ENCODE measurements at regions of chr12 and their contacts with region 1.

Region 1: GRCh38 chr12:111761099-111761498 is 5.6 kb upstream of the ALDH2 start:
- DNase-seq: no peak
- ATAC-seq: no peak
- H3K4me3 Mint-ChIP-seq: peak overlapping the region; percentile 78
- H3K27ac Mint-ChIP-seq: peak overlapping the region; percentile 92
- H3K4me1 Mint-ChIP-seq: peaks cover 88% of the 10 kb centered on the region
- H3K27me3 Mint-ChIP-seq: no peaks in the 10 kb centered on the region
- CTCF ChIP-seq: no peak

Region 2: GRCh38 chr12:111730420-111730819 is 30.7 kb before region 1 on chr12:
- CTCF ChIA-PET with region 1: no interaction called
- POLR2A ChIA-PET with region 1: no interaction called
- intact Hi-C with region 1: no loop called
- DNase-seq: no peak
- ATAC-seq: peak; percentile 50
- H3K4me3 Mint-ChIP-seq: no peak overlapping the region
- H3K27ac Mint-ChIP-seq: peak overlapping the region; percentile 76
- H3K4me1 Mint-ChIP-seq: peaks cover 11% of the 10 kb centered on the region
- H3K27me3 Mint-ChIP-seq: no peaks in the 10 kb centered on the region
- CTCF ChIP-seq: no peak

Region 3: GRCh38 chr12:111775205-111776193 is 14.4 kb after region 1 on chr12:
- CTCF ChIA-PET with region 1: interaction called, 6 read pairs
- POLR2A ChIA-PET with region 1: interaction called, 73 read pairs
- intact Hi-C with region 1: loop called (anchors 1 kb)
- DNase-seq: peak; percentile 75
- ATAC-seq: peak; percentile 96
- H3K4me3 Mint-ChIP-seq: peak overlapping the region; percentile 82
- H3K27ac Mint-ChIP-seq: peak overlapping the region; percentile 99
- H3K4me1 Mint-ChIP-seq: peaks cover 40% of the 10 kb centered on the region
- H3K27me3 Mint-ChIP-seq: no peaks in the 10 kb centered on the region
- CTCF ChIP-seq: no peak

Measured in activated B cell treated with CpG ODN at 0.5 μM for 24 hours (primary cell).